Mammary epithelial cell (primary cell): ENCODE measurements at regions of chr6 and their contacts with region 1.

Region 1: GRCh38 chr6:1574083-1574761 is 35.5 kb upstream of the FOXC1 start:
- DNase-seq: no peak
- H3K4me3 ChIP-seq: no peak overlapping the region
- H3K27ac ChIP-seq: no peak overlapping the region
- H3K4me1 ChIP-seq: peaks cover 3% of the 10 kb centered on the region
- H3K27me3 ChIP-seq: no peaks in the 10 kb centered on the region
- CTCF ChIP-seq: no peak

Region 2: DNA sequence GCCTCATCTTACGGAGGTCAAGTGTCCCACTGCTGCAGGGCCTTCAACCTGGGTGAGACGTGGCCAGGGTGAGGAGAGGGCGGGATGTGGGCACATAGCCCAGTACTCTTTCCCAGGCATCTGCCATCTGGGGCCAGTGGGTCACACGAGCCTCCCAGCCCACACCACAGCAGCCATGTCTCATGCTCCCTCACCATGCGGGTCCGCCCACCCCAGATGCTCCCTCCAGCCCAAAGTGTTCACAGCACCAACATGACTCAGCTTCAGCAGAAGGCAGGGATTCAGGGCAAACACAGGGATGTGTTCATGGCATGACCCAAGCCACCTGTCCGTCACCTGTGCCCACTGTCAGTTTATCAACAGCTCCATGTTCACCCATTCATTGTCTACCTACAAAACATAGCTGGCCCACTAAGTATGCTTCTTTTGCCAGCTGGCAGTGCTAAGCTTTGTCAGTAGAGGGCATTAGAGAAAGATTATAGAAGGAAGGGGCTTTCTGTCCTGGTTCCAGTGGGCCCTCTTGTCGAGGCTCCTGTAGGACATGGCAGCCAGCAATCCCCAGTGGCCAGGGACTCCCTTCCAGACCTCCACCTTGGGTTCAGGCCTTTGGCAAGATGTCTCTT is 75.6 kb before region 1 on chr6:
- CTCF ChIA-PET with region 1: no interaction called
- dilution Hi-C with region 1: loop called (anchors 5 kb)
- in situ Hi-C with region 1: no loop called
- intact Hi-C with region 1: no loop called
- DNase-seq: no peak
- H3K4me3 ChIP-seq: no peak overlapping the region
- H3K27ac ChIP-seq: no peak overlapping the region
- H3K4me1 ChIP-seq: no peaks in the 10 kb centered on the region
- H3K27me3 ChIP-seq: no peaks in the 10 kb centered on the region
- CTCF ChIP-seq: peak; percentile 23 to 28

Region 3: GRCh38 chr6:1524040-1524480 is 50.2 kb before region 1 on chr6:
- CTCF ChIA-PET with region 1: no interaction called
- dilution Hi-C with region 1: no loop called
- in situ Hi-C with region 1: no loop called
- intact Hi-C with region 1: no loop called
- DNase-seq: peak; percentile 64
- H3K4me3 ChIP-seq: no peak overlapping the region
- H3K27ac ChIP-seq: no peak overlapping the region
- H3K4me1 ChIP-seq: peaks cover 12% of the 10 kb centered on the region
- H3K27me3 ChIP-seq: no peaks in the 10 kb centered on the region
- CTCF ChIP-seq: peak; percentile 34 to 67

Region 4: GRCh38 chr6:1624851-1625781 is 50.9 kb after region 1 on chr6:
- CTCF ChIA-PET with region 1: no interaction called
- dilution Hi-C with region 1: no loop called
- in situ Hi-C with region 1: no loop called
- intact Hi-C with region 1: no loop called
- DNase-seq: peak; percentile 61
- H3K4me3 ChIP-seq: peak overlapping the region; percentile 54 to 74 (median 70)
- H3K27ac ChIP-seq: peak overlapping the region; percentile 35
- H3K4me1 ChIP-seq: peaks cover 11% of the 10 kb centered on the region
- H3K27me3 ChIP-seq: no peaks in the 10 kb centered on the region
- CTCF ChIP-seq: no peak